ENCODE measurements at regions of chr1 and their contacts with region 1.

Region 1: DNA sequence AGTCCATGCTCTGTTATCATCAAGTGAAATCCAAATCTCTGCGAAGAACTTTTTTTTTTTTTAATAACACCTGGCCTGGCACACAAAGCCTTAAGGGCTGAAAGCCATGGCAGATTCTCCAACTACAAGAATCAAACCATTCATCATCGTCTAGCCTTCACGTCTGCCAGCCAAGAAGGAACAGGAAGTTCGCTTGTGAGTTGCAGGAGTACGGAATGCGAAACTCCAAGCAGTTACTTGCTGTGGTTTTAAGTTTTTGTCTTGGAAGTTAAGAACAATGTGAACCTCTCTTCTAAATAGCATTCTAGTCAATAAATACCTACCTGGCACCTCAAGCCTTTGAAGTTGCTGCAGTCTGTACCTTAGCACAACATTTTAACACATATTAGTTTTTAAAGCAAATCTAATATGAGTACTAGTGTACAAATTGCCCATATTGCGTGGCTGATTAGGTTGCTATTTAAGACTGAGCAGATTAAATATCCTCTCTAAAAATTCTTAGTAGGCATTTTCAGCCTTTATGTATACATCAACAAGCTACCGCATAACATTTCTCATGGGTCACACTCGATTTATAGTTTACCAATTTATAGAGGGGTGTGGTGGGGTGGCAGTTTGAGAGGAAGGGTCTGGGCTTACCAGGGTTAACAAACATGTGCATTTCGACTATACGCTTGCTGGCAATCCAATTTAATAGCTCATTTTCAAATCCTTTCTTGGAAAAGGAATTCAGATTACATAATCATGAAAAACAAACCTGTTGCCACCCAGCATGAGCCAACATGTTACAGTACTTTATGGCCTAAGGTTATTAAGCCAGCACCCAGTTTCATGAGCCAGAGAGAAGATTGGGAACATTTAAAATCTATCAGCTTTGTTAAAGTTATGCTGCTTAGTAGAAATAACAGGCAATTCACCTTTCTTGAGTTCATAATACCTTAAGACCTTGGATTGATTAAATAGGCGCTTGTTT is 22.3 kb upstream of the PTPN14 start:
- DNase-seq: peak; percentile 97
- H3K4me3 Mint-ChIP-seq: peak overlapping the region; percentile 59
- H3K27ac Mint-ChIP-seq: peak overlapping the region; percentile 95
- H3K4me1 Mint-ChIP-seq: peaks cover 65% of the 10 kb centered on the region
- H3K27me3 Mint-ChIP-seq: no peaks in the 10 kb centered on the region
- CTCF ChIP-seq: no peak

Region 2: DNA sequence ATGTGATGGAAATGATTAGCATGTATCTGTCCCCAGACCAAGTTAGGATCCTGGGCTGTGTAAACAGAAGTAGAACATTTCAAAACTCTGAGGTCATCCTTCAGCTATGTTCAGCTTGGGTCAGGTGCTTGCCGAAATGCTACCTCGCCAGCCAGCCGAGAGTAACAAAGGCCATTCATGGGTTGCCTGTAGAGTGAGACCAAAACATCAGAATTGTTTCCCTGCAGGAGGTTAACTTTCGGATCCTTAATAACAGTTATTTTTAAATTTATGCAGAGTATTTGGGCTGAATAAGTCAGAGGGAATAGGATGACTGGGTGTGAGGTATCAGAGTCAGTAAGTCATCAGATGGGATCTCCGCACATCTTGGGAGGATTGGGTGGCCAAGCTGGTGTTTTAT is 257.1 kb before region 1 on chr1:
- CTCF ChIA-PET with region 1: no interaction called
- POLR2A ChIA-PET with region 1: no interaction called
- intact Hi-C with region 1: no loop called
- DNase-seq: peak; percentile 38
- H3K4me3 Mint-ChIP-seq: no peak overlapping the region
- H3K27ac Mint-ChIP-seq: no peak overlapping the region
- H3K4me1 Mint-ChIP-seq: no peaks in the 10 kb centered on the region
- H3K27me3 Mint-ChIP-seq: no peaks in the 10 kb centered on the region
- CTCF ChIP-seq: no peak

Region 3: DNA sequence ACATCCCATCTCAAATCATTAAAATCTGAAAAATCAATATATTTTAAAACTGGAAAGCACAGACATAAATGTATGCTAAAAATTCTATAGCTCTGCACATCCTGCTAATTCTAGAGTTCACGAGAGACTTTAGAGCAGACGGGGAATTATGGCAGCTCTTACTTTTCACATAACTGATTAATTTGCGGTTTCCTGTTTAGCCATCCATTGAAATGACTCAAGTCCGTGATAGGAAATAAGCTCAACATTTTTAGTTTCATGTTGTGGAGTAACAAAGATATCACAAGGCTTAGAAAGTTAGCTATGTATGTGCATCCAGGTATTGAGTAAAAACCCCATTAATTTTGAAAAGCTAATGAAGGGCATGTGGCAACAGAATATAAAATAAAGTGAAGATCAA is 169.5 kb before region 1 on chr1:
- CTCF ChIA-PET with region 1: interaction called, 3 read pairs
- POLR2A ChIA-PET with region 1: interaction called, 18 read pairs
- intact Hi-C with region 1: no loop called
- DNase-seq: peak; percentile 40
- H3K4me3 Mint-ChIP-seq: no peak overlapping the region
- H3K27ac Mint-ChIP-seq: peak overlapping the region; percentile 20
- H3K4me1 Mint-ChIP-seq: peaks cover 24% of the 10 kb centered on the region
- H3K27me3 Mint-ChIP-seq: no peaks in the 10 kb centered on the region
- CTCF ChIP-seq: no peak

Region 4: GRCh38 chr1:214422137-214422671 is 151.5 kb before region 1 on chr1:
- CTCF ChIA-PET with region 1: interaction called, 3 read pairs
- POLR2A ChIA-PET with region 1: interaction called, 69 read pairs
- intact Hi-C with region 1: no loop called
- DNase-seq: peak; percentile 84
- H3K4me3 Mint-ChIP-seq: peak overlapping the region; percentile 6
- H3K27ac Mint-ChIP-seq: peak overlapping the region; percentile 80
- H3K4me1 Mint-ChIP-seq: peaks cover 77% of the 10 kb centered on the region
- H3K27me3 Mint-ChIP-seq: no peaks in the 10 kb centered on the region
- CTCF ChIP-seq: no peak

Region 5: GRCh38 chr1:214439352-214440119 is 134.1 kb before region 1 on chr1:
- CTCF ChIA-PET with region 1: interaction called, 25 read pairs
- POLR2A ChIA-PET with region 1: interaction called, 307 read pairs
- intact Hi-C with region 1: no loop called
- DNase-seq: peak; percentile 100
- H3K4me3 Mint-ChIP-seq: peak overlapping the region; percentile 65
- H3K27ac Mint-ChIP-seq: peak overlapping the region; percentile 99
- H3K4me1 Mint-ChIP-seq: peaks cover 61% of the 10 kb centered on the region
- H3K27me3 Mint-ChIP-seq: no peaks in the 10 kb centered on the region
- CTCF ChIP-seq: no peak

Region 6: GRCh38 chr1:214460304-214460916 is 113.3 kb before region 1 on chr1:
- CTCF ChIA-PET with region 1: interaction called, 5 read pairs
- POLR2A ChIA-PET with region 1: interaction called, 65 read pairs
- intact Hi-C with region 1: no loop called
- DNase-seq: no peak
- H3K4me3 Mint-ChIP-seq: no peak overlapping the region
- H3K27ac Mint-ChIP-seq: peak overlapping the region; percentile 30
- H3K4me1 Mint-ChIP-seq: peaks cover 52% of the 10 kb centered on the region
- H3K27me3 Mint-ChIP-seq: no peaks in the 10 kb centered on the region
- CTCF ChIP-seq: no peak

Region 7: DNA sequence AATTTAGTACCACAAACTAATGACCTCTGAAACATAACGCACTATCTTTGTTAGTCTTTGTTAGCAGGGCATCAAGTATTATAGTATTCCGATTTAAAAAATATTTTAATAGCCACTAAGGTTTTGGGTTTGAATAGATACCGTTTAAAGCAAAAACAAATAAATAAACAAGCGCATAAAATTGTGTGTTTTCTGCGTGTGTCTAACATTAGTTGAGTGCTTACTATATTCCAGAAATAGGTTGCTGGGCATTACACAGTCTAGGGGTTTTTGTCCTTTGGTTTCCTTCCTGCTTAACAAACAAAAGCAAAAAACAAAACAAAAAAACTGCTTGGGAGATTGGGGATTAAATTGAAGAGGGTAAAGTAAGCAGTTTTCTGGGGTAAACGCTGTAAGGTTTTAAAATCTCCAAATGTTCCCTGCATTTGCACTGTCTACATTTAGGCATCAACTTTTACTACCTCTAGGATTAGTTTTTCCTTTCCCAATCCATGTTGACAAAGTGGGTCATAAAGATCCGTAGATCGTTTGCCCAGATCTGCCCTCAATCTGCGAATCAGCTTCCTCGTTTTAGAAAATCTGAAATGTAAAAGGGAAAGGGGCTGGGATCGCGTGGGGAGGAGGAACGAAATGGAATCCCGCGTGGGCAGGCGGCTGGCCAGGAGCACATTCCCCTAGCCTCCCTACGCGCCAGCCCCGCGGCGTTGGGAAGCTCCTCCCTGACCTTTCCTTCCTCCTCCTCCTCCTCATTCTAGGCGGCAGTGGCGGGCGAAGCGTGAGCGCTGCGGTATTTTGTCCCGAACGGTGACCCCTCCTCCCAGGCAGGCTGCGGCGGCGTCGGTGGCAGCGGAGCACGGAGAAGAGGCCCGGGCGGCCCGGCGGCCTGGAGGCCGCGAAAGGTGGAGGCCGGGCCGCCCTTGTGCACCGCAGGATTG is 993.2 kb after region 1 on chr1 and contains the start of gene KCTD3:
- CTCF ChIA-PET with region 1: no interaction called
- POLR2A ChIA-PET with region 1: interaction called, 17 read pairs
- intact Hi-C with region 1: no loop called
- DNase-seq: peak; percentile 90
- H3K4me3 Mint-ChIP-seq: peak within 1 kb of the TSS; percentile 98
- H3K27ac Mint-ChIP-seq: peak within 1 kb of the TSS; percentile 99
- H3K4me1 Mint-ChIP-seq: peaks cover 28% of the 10 kb centered on the region
- H3K27me3 Mint-ChIP-seq: no peaks in the 10 kb centered on the region
- CTCF ChIP-seq: no peak
- total RNA-seq, gene KCTD3: 78.9 and 90.3 TPM in 2 replicates